ENCODE measurements at regions of chr14 and their contacts with region 1.

Region 1: DNA sequence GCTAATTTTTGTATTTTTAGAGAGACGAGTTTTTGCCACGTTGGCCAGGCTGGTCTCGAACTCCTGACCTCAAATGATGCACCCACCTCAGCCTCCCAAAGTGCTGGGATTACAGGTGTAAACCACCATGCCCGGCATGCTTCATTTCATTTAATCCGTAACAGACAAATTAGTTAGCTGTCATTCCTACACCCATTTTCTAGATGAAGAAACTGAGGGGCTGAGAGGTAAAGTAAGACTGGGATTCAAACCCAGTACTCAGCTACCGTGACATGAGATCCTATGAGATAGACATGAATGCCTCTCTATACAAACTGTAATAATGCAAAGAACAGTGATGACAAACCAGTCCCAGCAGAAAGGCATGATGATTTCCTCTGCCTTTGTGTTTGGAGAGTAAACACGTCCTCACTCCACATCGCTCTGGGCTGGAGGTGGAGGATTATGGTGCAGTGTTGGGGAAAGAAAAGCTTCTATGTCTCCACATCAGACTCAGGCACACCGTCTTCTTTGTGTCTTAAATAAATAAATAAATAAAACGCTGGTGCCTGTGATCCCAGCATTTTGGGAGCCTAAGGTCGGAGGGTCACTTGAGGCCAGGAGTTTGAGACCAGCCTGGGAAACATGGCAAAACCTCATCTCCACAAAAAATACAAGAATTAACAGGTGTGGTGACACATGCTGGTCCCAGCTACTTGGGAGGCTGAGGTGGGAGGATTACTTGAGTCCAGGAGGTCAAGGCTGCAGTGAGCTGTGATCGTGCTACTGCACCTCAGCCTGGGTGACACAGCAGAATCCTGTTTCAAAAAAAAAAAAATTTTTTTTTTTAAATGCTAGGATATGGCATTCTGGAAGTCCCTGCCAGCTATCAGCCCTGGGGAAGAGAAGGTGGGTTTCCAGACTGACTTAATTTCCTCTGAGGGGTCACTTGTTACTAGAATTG is 10.5 kb downstream of the VSX2 start:
- DNase-seq: no peak
- ATAC-seq: no peak
- H3K4me3 ChIP-seq: no peak overlapping the region
- H3K27ac ChIP-seq: no peak overlapping the region
- H3K4me1 ChIP-seq: peaks cover 0 to 7% (median 2%) of the 10 kb centered on the region in 12 donors
- H3K27me3 ChIP-seq: peaks cover 0 to 38% (median 15%) of the 10 kb centered on the region in 9 donors
- CTCF ChIP-seq: no peak
- POLR2A ChIP-seq: no peak

Region 2: DNA sequence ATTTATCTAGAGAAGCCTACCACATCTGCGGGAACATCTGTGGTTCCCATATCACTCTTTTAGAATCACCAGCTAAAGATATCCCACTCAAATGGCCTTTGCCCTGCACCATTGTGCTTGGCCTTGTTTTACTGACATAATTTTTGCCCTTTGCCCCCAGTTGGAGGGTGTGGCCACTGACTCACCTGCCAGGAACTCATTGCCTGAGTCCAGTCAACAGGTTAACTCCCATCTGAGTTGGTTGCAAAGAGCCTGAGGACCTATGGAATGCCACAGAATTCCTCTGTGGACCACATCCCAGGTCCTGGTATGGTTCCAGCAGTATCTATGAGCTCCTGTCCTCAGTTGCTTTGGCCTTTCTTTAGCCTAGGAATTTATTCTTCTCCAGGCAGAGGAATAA is 453.7 kb before region 1 on chr14:
- intact Hi-C with region 1: no loop called
- DNase-seq: no peak
- ATAC-seq: no peak
- H3K4me3 ChIP-seq: no peak overlapping the region
- H3K27ac ChIP-seq: peak overlapping the region in 1 of 12 donors; percentile 76
- H3K4me1 ChIP-seq: peaks cover 0 to 22% (median 9%) of the 10 kb centered on the region in 12 donors
- H3K27me3 ChIP-seq: no peaks in the 10 kb centered on the region
- CTCF ChIP-seq: no peak
- POLR2A ChIP-seq: no peak

Region 3: GRCh38 chr14:74109369-74109768 is 140.3 kb before region 1 on chr14:
- intact Hi-C with region 1: loop called in 9 of 10 experiments (anchors 1 to 5 kb)
- DNase-seq: no peak
- ATAC-seq: no peak
- H3K4me3 ChIP-seq: no peak overlapping the region
- H3K27ac ChIP-seq: no peak overlapping the region
- H3K4me1 ChIP-seq: no peaks in the 10 kb centered on the region
- H3K27me3 ChIP-seq: no peaks in the 10 kb centered on the region
- CTCF ChIP-seq: no peak
- POLR2A ChIP-seq: no peak

Region 4: DNA sequence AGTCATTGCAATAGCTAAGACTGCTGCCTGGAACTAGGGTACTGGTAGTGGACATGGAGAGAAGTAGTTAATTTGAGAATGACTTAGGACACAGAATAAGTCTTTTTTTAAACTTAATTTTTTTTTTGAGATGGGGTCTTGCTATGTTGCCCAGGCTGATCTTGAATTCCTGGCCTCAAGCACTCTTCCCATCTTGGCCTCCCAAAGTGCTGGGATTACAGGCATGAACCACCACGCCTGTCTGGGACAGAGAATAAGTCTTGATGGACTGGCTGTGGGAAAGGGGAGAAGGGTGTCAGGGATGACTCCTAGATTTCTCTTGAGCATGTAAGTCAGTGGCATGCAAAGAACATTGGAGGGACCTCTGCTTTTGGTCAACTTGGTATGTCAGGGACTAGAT is 122.1 kb before region 1 on chr14:
- intact Hi-C with region 1: no loop called
- DNase-seq: no peak
- ATAC-seq: no peak
- H3K4me3 ChIP-seq: no peak overlapping the region
- H3K27ac ChIP-seq: no peak overlapping the region
- H3K4me1 ChIP-seq: no peaks in the 10 kb centered on the region
- H3K27me3 ChIP-seq: no peaks in the 10 kb centered on the region
- CTCF ChIP-seq: no peak
- POLR2A ChIP-seq: no peak

Region 5: GRCh38 chr14:74217672-74218448 is 31.8 kb before region 1 on chr14:
- intact Hi-C with region 1: loop called in 6 of 10 experiments (anchors 2 to 5 kb)
- DNase-seq: peak; percentile 53 to 86 (median 63)
- ATAC-seq: peak in 3 of 4 donors; percentile 75 to 94 (median 77)
- H3K4me3 ChIP-seq: peak overlapping the region in 5 of 12 donors; percentile 20 to 33 (median 29)
- H3K27ac ChIP-seq: no peak overlapping the region
- H3K4me1 ChIP-seq: peaks cover 0 to 13% (median 0%) of the 10 kb centered on the region in 12 donors
- H3K27me3 ChIP-seq: peaks cover 0 to 59% (median 18%) of the 10 kb centered on the region in 9 donors
- CTCF ChIP-seq: peak; percentile 79 to 95 (median 88)
- POLR2A ChIP-seq: no peak

Region 6: DNA sequence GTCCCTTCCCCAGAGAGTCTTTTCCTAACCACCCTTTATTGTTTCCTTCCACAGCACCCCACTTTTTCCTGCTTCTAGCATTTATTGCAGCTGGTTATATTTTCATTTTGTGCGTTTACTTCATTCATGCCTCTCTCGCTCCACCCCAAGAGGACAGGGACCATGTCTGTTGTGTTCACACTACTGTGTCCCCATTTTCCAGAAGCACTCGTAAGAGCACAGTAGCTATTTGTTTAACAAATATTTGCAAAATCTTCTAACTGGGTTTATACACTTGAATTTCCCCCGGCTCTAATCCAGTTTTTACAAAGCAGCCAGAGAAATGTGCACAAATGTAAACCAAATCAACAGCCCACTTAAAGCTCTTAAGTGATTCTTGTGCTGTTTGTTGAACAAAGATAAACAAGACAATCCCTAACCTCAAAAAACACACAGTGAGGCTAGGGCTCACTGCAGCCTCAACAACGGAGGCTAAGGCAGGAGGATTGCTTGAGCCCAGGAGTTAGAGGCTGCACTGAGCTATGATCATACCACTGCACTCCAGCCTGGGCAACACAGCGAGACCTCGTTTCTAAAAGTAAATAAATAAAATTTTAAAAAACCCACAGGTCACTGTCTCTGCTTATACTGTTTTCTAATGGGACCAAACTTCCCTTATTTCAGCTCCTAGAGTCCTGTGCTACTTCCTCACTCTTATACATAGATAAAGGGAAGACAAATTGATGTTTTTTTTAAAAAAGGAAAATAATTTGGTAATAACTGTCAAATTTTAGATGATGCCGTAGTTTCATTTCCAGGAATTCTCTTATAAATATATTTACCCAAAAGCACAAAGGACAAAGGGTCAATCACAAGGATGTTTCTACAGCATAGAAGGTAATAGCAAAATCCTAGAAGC is 59.7 kb after region 1 on chr14:
- intact Hi-C with region 1: no loop called
- DNase-seq: no peak
- ATAC-seq: no peak
- H3K4me3 ChIP-seq: no peak overlapping the region
- H3K27ac ChIP-seq: no peak overlapping the region
- H3K4me1 ChIP-seq: peaks cover 0 to 5% (median 0%) of the 10 kb centered on the region in 12 donors
- H3K27me3 ChIP-seq: no peaks in the 10 kb centered on the region
- CTCF ChIP-seq: no peak
- POLR2A ChIP-seq: no peak

Region 7: DNA sequence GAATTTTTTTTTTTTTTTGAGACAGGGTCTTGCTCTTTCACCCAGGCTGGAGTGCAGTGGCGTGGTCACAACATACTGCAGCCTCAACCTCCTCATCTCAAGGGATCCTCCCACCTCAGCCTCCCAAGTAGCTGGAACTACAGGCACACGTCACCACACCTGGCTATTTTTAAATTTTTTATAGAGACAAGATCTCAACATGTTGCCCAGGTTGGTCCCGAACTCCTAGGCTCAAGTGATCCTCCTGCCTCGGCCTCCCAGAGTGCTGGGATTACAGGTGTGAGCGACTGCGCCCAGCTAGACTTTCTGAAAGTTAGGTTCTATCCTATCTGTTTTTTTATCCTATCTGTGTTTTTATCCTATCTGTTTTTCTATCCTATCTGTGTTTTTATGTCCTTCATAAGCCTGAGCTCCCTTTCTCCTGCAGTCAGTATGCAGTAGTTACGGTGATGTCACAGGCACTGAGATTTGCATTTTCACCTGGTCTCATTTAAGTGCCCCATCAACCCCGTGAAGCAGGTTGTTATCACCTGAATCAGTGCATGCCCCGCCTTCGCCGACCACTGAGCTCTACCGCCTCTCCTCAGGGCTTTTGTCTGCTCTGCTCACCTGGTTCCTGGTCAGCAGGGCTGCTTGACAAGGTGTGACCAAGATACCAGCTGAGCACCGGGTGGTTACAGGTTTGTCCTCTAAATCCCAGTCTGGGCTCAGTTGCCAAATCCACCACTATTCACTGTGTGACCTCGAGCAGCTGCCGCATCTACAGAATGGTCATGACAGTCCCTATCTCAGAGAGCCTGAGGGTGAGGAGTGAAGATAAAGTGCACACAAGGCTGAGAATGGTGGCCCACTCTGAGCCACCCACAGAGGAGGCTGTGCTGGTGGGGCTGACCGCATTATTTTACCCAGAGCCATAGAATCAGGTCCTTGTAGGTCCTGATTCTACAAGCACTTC is 143.2 kb after region 1 on chr14:
- intact Hi-C with region 1: no loop called
- DNase-seq: no peak
- ATAC-seq: no peak
- H3K4me3 ChIP-seq: no peak overlapping the region
- H3K27ac ChIP-seq: no peak overlapping the region
- H3K4me1 ChIP-seq: no peaks in the 10 kb centered on the region
- H3K27me3 ChIP-seq: peaks cover 0 to 11% (median 0%) of the 10 kb centered on the region in 9 donors
- CTCF ChIP-seq: no peak
- POLR2A ChIP-seq: no peak

Measured in heart left ventricle (tissue), 16 donors.